ENCODE measurements at regions of chr17 and their contacts with region 1.

Region 1: GRCh38 chr17:4304417-4305027 is 40.7 kb upstream of the ANKFY1 start:
- DNase-seq: peak in 1 of 2 donors; percentile 59
- H3K4me3 ChIP-seq: no peak overlapping the region
- H3K27ac ChIP-seq: no peak overlapping the region
- H3K4me1 ChIP-seq: peaks cover 0 to 31% (median 7%) of the 10 kb centered on the region in 4 donors
- H3K27me3 ChIP-seq: no peaks in the 10 kb centered on the region
- CTCF ChIP-seq: peak; percentile 62 to 66

Region 2: DNA sequence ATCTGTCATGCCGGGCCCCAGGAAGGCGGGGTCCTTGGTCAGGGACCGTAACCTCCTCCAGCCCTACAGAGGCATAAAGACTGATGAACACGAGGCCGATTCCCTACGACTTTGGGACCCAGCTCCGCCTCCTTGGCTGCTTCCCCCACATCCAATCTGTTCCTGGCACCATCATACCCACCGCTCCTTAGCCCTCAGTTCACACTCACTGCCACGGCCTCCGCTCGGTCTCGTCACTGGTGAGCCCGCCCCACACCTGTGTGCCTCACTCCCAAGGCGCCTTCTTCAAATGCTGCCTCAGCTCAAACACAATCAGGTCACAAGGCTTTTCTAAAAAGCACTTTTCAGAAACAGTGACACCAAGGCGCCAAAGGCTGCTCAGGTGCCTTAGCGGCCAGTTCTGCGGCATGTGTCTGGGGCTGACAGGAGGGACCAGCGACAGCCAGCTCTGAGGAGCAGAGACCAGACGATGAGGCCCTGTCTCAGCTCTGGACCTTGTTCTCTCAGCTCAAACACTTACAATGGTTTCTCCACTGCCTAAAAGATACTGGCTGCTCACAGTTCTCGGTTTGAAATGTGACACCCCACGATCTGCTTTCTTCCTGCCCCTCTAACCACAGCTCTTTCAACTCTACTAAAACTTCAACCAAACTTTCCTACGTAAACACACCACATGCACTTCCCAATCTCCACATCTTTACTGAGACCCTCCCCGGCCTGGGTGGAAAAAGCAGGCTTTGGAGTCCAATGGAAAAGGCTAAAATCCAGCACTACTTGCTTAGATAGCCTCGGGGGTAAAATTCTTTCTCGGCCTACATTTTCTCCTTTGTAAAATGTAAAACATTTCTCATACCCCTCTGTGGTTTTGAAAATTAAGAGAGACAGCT is 128.4 kb before region 1 on chr17:
- intact Hi-C with region 1: no loop called
- DNase-seq: no peak
- H3K4me3 ChIP-seq: no peak overlapping the region
- H3K27ac ChIP-seq: no peak overlapping the region
- H3K4me1 ChIP-seq: no peaks in the 10 kb centered on the region
- H3K27me3 ChIP-seq: no peaks in the 10 kb centered on the region
- CTCF ChIP-seq: no peak

Region 3: GRCh38 chr17:4215882-4216570 is 88.5 kb before region 1 on chr17:
- intact Hi-C with region 1: loop called (anchors 10 kb)
- DNase-seq: no peak
- H3K4me3 ChIP-seq: no peak overlapping the region
- H3K27ac ChIP-seq: peak overlapping the region; percentile 3 to 74
- H3K4me1 ChIP-seq: peaks cover 0 to 44% (median 15%) of the 10 kb centered on the region in 4 donors
- H3K27me3 ChIP-seq: no peaks in the 10 kb centered on the region
- CTCF ChIP-seq: no peak

Region 4: DNA sequence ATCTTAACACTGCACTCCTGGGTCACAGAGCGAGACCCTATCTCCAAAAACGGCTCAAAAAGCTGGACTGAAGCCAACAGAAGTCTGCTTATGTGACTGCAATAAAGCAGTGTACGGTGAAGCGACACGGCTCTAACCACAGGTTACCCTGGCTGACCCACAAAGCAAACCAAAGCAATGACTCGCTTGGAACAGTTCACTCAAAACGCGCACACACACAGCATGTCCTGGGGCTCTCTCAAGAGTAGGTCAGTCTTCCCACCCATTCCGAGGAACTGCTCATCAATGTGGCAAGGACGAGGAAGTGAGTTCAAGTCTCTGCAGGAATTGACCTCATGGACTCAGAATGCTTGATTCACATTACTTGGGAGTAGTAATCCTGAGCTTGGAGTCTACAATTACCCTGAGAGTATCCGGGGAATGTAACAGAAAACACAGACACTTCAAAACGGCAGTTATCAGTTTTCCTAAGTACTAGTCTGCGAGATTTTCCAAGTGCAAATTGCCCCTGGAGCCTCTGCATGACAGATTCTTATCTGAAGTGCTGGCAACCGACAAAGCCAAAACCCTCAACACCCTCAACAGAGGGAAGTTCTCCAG is 374.0 kb after region 1 on chr17:
- intact Hi-C with region 1: no loop called
- DNase-seq: no peak
- H3K4me3 ChIP-seq: no peak overlapping the region
- H3K27ac ChIP-seq: no peak overlapping the region
- H3K4me1 ChIP-seq: peaks cover 0 to 3% (median 0%) of the 10 kb centered on the region in 4 donors
- H3K27me3 ChIP-seq: no peaks in the 10 kb centered on the region
- CTCF ChIP-seq: no peak

Measured in tibial artery (tissue), 4 donors.